H1 (cell line): ENCODE measurements at regions of chr21 and their contacts with region 1.

Region 1: GRCh38 chr21:33854604-33855003 is 61.0 kb downstream of the ATP5PO start:
- DNase-seq: no peak
- H3K4me3 ChIP-seq: no peak overlapping the region
- H3K27ac ChIP-seq: no peak overlapping the region
- H3K4me1 ChIP-seq: peaks cover 0 to 16% (median 13%) of the 10 kb centered on the region in 4 experiments; a peak in 5 of 7 replicates
- H3K27me3 ChIP-seq: no peaks in the 10 kb centered on the region; a peak in 1 of 7 replicates
- CTCF ChIP-seq: no peak
- EP300 ChIP-seq: no peak
- POLR2A ChIP-seq: no peak
- RAD21 ChIP-seq: no peak

Region 2: GRCh38 chr21:33634254-33634653 is 220.3 kb before region 1 on chr21:
- CTCF ChIA-PET with region 1: no interaction called
- POLR2A ChIA-PET with region 1: no interaction called
- DNase-seq: no peak
- H3K4me3 ChIP-seq: no peak overlapping the region
- H3K27ac ChIP-seq: no peak overlapping the region
- H3K4me1 ChIP-seq: no peaks in the 10 kb centered on the region
- H3K27me3 ChIP-seq: no peaks in the 10 kb centered on the region
- CTCF ChIP-seq: no peak
- EP300 ChIP-seq: no peak
- POLR2A ChIP-seq: no peak
- RAD21 ChIP-seq: no peak

Region 3: DNA sequence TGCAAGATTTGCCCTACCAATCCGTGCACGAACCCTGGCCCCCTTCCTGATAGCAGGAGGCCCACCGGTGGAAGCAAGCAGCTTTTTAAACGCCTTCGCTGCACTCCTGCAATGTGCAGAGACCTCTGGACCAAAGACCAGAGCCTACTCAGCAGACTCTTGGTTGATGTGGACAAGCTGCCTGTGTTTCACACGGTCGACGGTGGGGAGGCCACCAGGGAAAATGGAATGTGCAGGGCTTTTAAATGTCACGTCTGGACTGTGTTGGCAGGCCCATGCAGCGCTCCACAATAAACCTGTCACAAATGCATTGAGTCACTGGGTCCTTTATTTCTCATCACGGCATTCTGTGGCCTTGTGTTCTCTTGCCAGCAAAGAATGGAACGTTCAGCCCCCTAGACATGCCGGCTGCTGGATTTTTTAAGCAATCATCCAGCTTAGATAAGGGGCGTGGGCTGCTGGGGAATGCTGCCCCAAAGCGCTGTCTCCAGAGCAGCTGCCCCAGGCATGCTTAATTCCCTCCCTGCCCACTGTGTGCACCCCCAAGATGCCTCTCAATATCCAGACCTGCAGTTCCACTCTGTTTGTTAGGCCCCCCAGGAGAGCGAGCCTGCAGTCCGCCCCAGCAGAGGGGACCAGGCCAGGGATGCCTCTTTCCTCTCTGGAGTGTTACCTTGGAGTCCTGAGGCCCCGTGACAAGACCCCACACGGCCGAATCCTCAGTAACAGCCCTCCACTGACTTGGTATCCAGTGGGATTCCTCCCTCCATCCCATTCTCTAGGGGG is 10.3 kb before region 1 on chr21:
- CTCF ChIA-PET with region 1: interaction called, 25 read pairs
- POLR2A ChIA-PET with region 1: interaction called, 5 read pairs
- DNase-seq: no peak
- H3K4me3 ChIP-seq: no peak overlapping the region
- H3K27ac ChIP-seq: no peak overlapping the region
- H3K4me1 ChIP-seq: no peaks in the 10 kb centered on the region; a peak in 3 of 7 replicates
- H3K27me3 ChIP-seq: no peaks in the 10 kb centered on the region
- CTCF ChIP-seq: no peak
- EP300 ChIP-seq: no peak
- POLR2A ChIP-seq: no peak
- RAD21 ChIP-seq: no peak

Region 4: GRCh38 chr21:33878824-33879223 is 24.2 kb after region 1 on chr21:
- CTCF ChIA-PET with region 1: interaction called, 10 read pairs
- POLR2A ChIA-PET with region 1: no interaction called
- DNase-seq: no peak
- H3K4me3 ChIP-seq: no peak overlapping the region
- H3K27ac ChIP-seq: no peak overlapping the region
- H3K4me1 ChIP-seq: no peaks in the 10 kb centered on the region
- H3K27me3 ChIP-seq: no peaks in the 10 kb centered on the region
- CTCF ChIP-seq: no peak
- EP300 ChIP-seq: no peak
- POLR2A ChIP-seq: no peak
- RAD21 ChIP-seq: no peak

Region 5: DNA sequence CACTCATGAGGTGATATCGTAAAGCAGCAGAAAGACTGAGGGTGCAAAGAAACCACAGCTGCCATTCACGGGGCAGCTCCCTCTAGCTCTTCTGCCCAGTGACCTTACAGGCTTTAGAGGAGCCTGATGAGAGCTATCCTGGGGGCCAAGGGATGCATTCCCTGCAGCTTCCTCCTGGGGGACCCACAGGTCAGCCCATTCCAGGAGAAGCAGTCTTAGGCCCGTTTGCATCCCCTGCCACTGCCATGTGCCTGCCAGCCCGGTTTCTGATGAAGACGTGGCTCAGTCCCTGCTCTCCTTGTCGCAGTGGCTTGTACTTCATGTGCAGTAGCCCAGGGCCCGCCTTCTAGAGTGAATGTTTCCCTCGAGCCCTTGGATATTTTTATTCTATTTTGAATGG is 38.2 kb after region 1 on chr21:
- CTCF ChIA-PET with region 1: interaction called, 11 read pairs
- POLR2A ChIA-PET with region 1: no interaction called
- DNase-seq: peak; percentile 64 to 66
- H3K4me3 ChIP-seq: no peak overlapping the region
- H3K27ac ChIP-seq: no peak overlapping the region
- H3K4me1 ChIP-seq: peaks cover 3 to 11% (median 6%) of the 10 kb centered on the region in 4 experiments; a peak in 6 of 7 replicates
- H3K27me3 ChIP-seq: no peaks in the 10 kb centered on the region
- CTCF ChIP-seq: peak; percentile 55 to 75 (median 71)
- EP300 ChIP-seq: no peak
- POLR2A ChIP-seq: no peak
- RAD21 ChIP-seq: peak; percentile 70 to 81

Region 6: DNA sequence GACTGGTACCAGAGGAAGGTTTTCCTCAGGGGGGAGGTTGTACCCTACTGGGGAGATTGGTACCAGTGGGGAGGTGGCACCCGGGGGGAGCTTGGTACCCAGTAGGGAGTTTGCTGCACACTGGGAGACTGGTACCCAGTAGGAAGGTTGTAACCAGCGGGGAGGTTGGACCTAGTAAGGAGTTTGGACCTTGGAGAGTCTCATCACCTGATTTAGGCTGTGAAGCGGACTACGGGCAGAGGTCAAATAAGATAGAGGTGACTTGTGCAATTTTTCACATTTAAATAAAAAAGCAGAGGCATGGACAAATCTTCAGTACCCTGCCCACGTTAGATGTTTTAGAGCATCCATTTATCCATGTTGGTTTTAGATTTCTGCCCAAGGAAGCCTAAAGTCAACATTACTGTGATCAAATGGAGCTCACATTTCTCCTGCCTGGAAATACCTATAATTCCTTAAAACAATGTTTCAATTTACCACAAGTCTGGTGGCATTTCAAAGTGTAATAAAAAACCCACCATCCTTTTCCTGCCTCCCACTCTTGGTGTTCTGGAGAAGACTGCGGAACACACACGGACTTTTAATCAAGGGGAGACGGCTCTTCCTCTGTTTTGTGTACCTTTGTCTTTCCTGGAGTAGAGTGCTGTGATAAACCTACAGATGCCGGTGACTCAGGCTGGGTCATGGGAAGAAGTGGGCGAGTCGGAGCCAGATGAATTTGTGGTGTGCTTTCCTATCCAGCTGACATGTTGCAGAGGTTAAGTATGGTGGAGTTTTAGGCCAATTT is 182.6 kb after region 1 on chr21:
- CTCF ChIA-PET with region 1: no interaction called
- POLR2A ChIA-PET with region 1: no interaction called
- DNase-seq: no peak
- H3K4me3 ChIP-seq: no peak overlapping the region
- H3K27ac ChIP-seq: no peak overlapping the region
- H3K4me1 ChIP-seq: peaks cover 0 to 9% (median 2%) of the 10 kb centered on the region in 4 experiments; a peak in 3 of 7 replicates
- H3K27me3 ChIP-seq: no peaks in the 10 kb centered on the region
- CTCF ChIP-seq: no peak
- EP300 ChIP-seq: no peak
- POLR2A ChIP-seq: no peak
- RAD21 ChIP-seq: no peak